ENCODE measurements at regions of chr16 and their contacts with region 1.

Region 1: GRCh38 chr16:13291591-13292333 is 390.4 kb downstream of the SHISA9 start:
- DNase-seq: no peak
- ATAC-seq: no peak
- H3K4me3 Mint-ChIP-seq: no peak overlapping the region
- H3K27ac Mint-ChIP-seq: no peak overlapping the region
- H3K4me1 Mint-ChIP-seq: no peaks in the 10 kb centered on the region
- H3K27me3 Mint-ChIP-seq: peaks cover 13% of the 10 kb centered on the region

Region 2: DNA sequence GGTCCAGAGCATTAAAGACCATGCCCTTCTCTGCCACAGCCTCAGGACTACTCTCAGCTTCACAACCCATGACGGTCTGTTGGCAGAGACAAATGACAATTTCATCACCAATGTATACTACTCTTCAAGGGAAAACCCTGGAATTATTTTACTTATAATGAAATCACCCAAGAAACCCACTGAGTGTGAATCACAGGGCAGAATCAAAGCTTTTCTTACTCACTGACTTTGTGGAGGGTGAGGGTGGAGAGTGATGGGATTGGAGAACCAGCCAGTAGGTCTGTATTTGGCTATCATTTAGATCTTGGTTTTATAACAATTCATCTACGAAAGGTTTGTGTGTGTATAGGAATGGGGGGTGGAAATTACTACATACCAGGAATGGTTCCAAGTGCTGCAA is 52.2 kb after region 1 on chr16:
- CTCF ChIA-PET with region 1: no interaction called
- POLR2A ChIA-PET with region 1: no interaction called
- intact Hi-C with region 1: no loop called
- DNase-seq: no peak
- ATAC-seq: no peak
- H3K4me3 Mint-ChIP-seq: no peak overlapping the region
- H3K27ac Mint-ChIP-seq: no peak overlapping the region
- H3K4me1 Mint-ChIP-seq: no peaks in the 10 kb centered on the region
- H3K27me3 Mint-ChIP-seq: peaks cover 2% of the 10 kb centered on the region

Region 3: DNA sequence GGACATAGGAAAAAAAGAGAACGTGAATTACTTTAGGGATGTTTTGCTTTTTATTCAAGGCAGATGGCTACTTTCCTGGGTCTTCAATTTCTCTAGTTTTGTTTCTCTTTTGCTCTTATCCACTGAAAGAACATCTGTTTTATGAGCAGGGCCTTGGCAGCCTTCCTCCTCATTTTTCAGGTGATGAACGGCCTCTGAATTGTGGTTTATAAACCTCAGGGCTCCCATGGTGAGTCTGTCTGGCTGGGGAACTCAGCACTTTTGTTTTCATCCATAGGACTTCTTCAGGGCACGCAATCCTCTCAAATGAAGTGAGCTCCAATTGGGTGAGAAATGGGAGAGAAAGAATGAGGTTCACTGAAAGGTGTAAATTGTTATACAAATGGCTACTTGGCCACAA is 441.8 kb after region 1 on chr16:
- CTCF ChIA-PET with region 1: no interaction called
- POLR2A ChIA-PET with region 1: interaction called, 11 read pairs
- intact Hi-C with region 1: no loop called
- DNase-seq: no peak
- ATAC-seq: no peak
- H3K4me3 Mint-ChIP-seq: no peak overlapping the region
- H3K27ac Mint-ChIP-seq: no peak overlapping the region
- H3K4me1 Mint-ChIP-seq: no peaks in the 10 kb centered on the region
- H3K27me3 Mint-ChIP-seq: peaks cover 4% of the 10 kb centered on the region

Measured in activated CD4-positive, alpha-beta T cell treated with anti-CD3 and anti-CD28 coated beads for 36 hours (primary cell).